ENCODE measurements at regions of chr22 and their contacts with region 1.

Region 1: DNA sequence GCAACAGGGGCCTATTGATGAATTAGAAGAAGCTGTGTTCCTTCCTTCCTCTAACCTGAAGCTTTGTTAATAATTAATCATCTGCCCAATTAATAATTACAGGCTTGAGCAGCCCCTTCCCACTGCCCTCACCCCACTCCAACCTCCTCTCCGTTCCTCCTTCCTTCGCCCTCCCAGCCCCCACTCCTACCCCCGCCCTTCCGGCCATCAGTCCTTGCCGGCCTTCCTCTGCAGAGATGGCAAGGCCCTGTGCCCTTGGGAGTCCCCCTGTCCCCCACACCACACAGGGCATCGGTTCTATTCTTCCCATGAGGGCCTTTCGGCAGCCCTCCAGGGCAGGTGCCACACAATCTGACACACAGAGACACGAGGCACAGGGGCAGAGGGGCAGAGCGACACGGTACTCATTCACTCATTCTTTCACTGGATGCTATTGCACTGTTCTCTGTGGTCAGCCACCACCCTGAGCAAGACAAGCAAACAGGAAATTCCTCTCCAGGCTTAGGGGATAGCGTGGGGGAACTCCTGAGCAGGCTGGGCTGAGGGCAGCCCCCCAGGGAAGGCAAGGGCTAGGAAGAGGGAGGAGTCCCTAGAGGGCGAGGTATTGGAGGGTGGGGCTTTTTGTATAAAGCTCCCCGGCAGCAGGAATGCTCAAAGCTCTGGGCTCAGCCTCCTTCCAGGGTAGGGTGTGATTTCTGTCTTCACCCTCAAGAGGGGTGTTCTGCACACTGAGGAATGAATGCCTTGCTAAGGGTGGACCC is 14.7 kb downstream of the MGAT3 start:
- DNase-seq: no peak
- H3K4me3 ChIP-seq: no peak overlapping the region
- H3K27ac ChIP-seq: peak overlapping the region in 2 of 5 donors; percentile 52 to 81
- H3K4me1 ChIP-seq: peaks cover 0 to 19% of the 10 kb centered on the region in 2 donors
- H3K27me3 ChIP-seq: no peaks in the 10 kb centered on the region
- CTCF ChIP-seq: no peak
- POLR2A ChIP-seq: no peak

Region 2: GRCh38 chr22:39946503-39947219 is 475.1 kb after region 1 on chr22:
- intact Hi-C with region 1: no loop called
- DNase-seq: no peak
- H3K4me3 ChIP-seq: no peak overlapping the region
- H3K27ac ChIP-seq: no peak overlapping the region
- H3K4me1 ChIP-seq: no peaks in the 10 kb centered on the region
- H3K27me3 ChIP-seq: no peaks in the 10 kb centered on the region
- CTCF ChIP-seq: no peak
- POLR2A ChIP-seq: no peak

Region 3: DNA sequence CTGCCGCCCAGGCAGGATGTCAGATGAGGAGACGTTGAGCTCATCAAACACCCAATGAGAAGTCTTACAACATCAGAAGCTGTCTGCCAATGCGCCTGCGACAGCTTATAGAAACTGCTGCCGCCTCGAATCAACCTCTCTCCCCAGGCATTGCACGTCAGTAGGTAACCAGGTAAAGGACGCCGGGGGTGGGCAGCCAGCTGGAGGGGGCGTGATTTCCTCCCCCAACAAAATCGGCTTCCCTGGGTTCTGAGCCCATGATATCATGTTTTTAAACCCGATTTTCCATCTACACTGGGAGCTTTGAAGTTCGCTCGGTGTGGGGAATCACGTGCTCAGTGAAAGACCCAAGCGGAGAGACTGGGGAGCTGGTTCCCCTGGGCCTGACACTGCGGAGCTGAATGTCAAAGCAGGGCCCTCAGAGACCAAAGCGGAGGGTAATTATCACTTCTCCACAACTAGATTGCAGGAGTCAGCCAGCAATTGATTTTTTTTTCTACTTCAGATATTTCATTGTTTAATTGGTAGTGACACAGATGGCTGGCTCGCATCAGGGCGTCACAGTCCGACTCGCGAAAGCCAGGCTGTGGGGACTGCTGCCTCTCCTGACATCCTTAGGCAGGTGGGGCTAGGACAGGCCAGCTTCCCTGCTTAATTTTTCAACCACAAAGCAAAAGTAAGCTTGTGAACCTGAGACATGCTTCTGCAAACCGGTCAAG is 538.6 kb after region 1 on chr22:
- intact Hi-C with region 1: loop called in 1 of 2 experiments (anchors 10 kb)
- DNase-seq: no peak
- H3K4me3 ChIP-seq: no peak overlapping the region
- H3K27ac ChIP-seq: no peak overlapping the region
- H3K4me1 ChIP-seq: no peaks in the 10 kb centered on the region
- H3K27me3 ChIP-seq: peaks cover 8% of the 10 kb centered on the region
- CTCF ChIP-seq: no peak
- POLR2A ChIP-seq: no peak